ENCODE measurements at regions of chr1 and their contacts with region 1.

Region 1: GRCh38 chr1:9269078-9269501 is 23.6 kb upstream of the SPSB1 start:
- DNase-seq: no peak
- H3K4me3 ChIP-seq: no peak overlapping the region
- H3K27ac ChIP-seq: no peak overlapping the region
- H3K4me1 ChIP-seq: peaks cover 3 to 7% of the 10 kb centered on the region in 2 donors
- H3K27me3 ChIP-seq: no peaks in the 10 kb centered on the region
- CTCF ChIP-seq: no peak

Region 2: GRCh38 chr1:9186082-9186859 is 82.8 kb before region 1 on chr1:
- intact Hi-C with region 1: no loop called
- DNase-seq: no peak
- H3K4me3 ChIP-seq: no peak overlapping the region
- H3K27ac ChIP-seq: no peak overlapping the region
- H3K4me1 ChIP-seq: peaks cover 2 to 7% of the 10 kb centered on the region in 2 donors
- H3K27me3 ChIP-seq: no peaks in the 10 kb centered on the region
- CTCF ChIP-seq: no peak

Region 3: GRCh38 chr1:9455487-9456234 is 186.6 kb after region 1 on chr1:
- intact Hi-C with region 1: loop called (anchors 1 kb)
- DNase-seq: no peak
- H3K4me3 ChIP-seq: no peak overlapping the region
- H3K27ac ChIP-seq: no peak overlapping the region
- H3K4me1 ChIP-seq: peaks cover 0 to 10% of the 10 kb centered on the region in 2 donors
- H3K27me3 ChIP-seq: no peaks in the 10 kb centered on the region
- CTCF ChIP-seq: peak; percentile 76 to 89 (median 84)

Region 4: GRCh38 chr1:9573723-9574122 is 304.6 kb after region 1 on chr1:
- intact Hi-C with region 1: loop called (anchors 10 kb)
- DNase-seq: no peak
- H3K4me3 ChIP-seq: no peak overlapping the region
- H3K27ac ChIP-seq: no peak overlapping the region
- H3K4me1 ChIP-seq: no peaks in the 10 kb centered on the region
- H3K27me3 ChIP-seq: no peaks in the 10 kb centered on the region
- CTCF ChIP-seq: peak; percentile 14 to 56 (median 17)

Measured in ascending aorta (tissue), 2 donors.